ENCODE measurements at regions of chrX and their contacts with region 1.

Region 1: DNA sequence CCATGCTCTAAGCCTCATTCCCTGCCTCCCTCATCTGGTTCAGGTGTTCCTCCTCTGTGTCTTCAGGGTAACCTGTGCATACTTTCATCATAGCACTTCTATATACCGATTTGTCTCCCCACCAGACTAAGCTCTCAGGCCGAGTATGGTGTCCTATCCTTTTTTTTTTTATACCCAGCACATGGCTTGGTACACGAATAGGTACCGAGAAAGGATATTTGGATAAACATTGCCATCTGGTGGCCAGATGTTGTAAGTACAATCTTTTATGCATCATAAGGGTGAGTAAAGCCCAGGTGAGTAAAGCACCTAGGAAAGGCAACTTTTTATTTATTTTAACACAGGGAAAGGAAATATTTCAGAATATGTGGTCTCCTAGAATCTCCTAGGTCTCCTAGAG is 68.4 kb downstream of the MID2 start:
- DNase-seq: peak; percentile 5
- H3K4me3 Mint-ChIP-seq: no peak overlapping the region
- H3K27ac Mint-ChIP-seq: no peak overlapping the region
- H3K4me1 Mint-ChIP-seq: no peaks in the 10 kb centered on the region
- H3K27me3 Mint-ChIP-seq: peaks cover 2% of the 10 kb centered on the region

Region 2: GRCh38 chrX:106999002-106999975 is 894.7 kb before region 1 on chrX:
- intact Hi-C with region 1: loop called (anchors 5 kb)
- DNase-seq: peak; percentile 12
- H3K4me3 Mint-ChIP-seq: peak overlapping the region; percentile 87
- H3K27ac Mint-ChIP-seq: no peak overlapping the region
- H3K4me1 Mint-ChIP-seq: peaks cover 12% of the 10 kb centered on the region
- H3K27me3 Mint-ChIP-seq: peaks cover 3% of the 10 kb centered on the region

Region 3: DNA sequence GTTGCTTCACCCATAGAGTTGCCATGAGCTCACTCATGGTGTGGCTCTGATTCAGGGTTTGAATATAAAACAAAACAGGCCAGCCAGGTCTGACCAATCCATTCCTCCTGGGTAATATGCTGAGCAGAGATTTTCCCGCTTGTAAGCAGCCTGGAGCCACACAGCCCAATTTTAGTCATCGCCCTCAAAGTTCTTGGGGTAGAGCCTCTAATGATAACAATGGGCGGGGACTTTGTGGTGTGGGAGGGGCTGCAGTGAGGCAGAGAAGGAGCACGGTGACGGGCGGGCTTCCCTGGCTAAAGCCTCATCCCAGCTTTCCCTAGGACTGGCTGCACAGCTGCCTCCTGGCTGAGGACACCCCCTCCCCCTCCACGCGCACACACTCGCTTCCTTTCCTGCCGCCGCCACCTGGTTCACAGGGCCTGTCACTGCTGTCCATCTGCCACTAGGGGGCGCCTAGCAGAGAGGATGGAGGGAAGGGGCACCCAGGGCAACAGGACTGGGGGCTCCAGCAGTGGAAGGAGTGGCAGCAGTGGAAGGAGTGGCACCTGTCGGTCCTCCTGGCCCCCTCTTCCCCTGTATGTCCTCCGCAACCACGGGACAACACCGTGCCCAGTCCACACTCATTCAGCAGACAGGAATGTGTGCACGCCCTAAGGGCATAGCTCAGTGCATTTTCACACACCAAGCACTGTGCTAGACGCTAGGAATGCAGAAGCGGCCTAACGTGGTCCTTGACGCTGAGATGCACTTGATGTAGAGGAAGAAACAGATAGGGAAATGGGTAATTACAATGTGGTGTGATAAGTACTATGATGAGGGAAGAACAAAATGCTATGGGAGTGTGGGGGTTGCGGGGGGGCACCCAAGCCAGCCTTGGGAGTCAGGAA is 238.9 kb before region 1 on chrX:
- intact Hi-C with region 1: loop called (anchors 1 kb)
- DNase-seq: peak; percentile 38
- H3K4me3 Mint-ChIP-seq: no peak overlapping the region
- H3K27ac Mint-ChIP-seq: no peak overlapping the region
- H3K4me1 Mint-ChIP-seq: peaks cover 7% of the 10 kb centered on the region
- H3K27me3 Mint-ChIP-seq: no peaks in the 10 kb centered on the region

Region 4: GRCh38 chrX:107716816-107717700 is 177.0 kb before region 1 on chrX:
- intact Hi-C with region 1: loop called (anchors 2 kb)
- DNase-seq: peak; percentile 84
- H3K4me3 Mint-ChIP-seq: peak overlapping the region; percentile 93
- H3K27ac Mint-ChIP-seq: peak overlapping the region; percentile 87
- H3K4me1 Mint-ChIP-seq: peaks cover 46% of the 10 kb centered on the region
- H3K27me3 Mint-ChIP-seq: no peaks in the 10 kb centered on the region

Region 5: GRCh38 chrX:107769581-107770317 is 124.3 kb before region 1 on chrX:
- intact Hi-C with region 1: no loop called
- DNase-seq: no peak
- H3K4me3 Mint-ChIP-seq: no peak overlapping the region
- H3K27ac Mint-ChIP-seq: no peak overlapping the region
- H3K4me1 Mint-ChIP-seq: no peaks in the 10 kb centered on the region
- H3K27me3 Mint-ChIP-seq: peaks cover 8% of the 10 kb centered on the region

Region 6: DNA sequence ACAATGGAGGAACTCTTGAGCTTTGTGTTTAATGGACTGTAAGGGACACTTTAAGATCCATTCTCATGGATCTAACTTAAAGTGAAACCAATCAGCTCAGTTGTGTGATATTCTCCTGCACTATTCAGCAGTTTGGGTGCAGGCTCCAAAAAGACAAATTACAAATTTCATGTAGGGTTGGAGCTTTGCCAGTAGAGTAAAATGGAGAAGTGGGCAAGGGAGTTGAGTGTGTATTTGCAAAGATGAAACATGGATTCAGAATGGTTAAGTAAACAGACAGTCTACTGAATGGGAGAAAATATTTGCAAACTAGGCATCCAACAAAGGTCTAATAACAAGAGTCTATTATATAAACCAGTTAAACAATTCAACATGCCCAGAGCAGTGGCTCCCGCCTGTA is 89.6 kb before region 1 on chrX:
- intact Hi-C with region 1: no loop called
- DNase-seq: no peak
- H3K4me3 Mint-ChIP-seq: no peak overlapping the region
- H3K27ac Mint-ChIP-seq: no peak overlapping the region
- H3K4me1 Mint-ChIP-seq: no peaks in the 10 kb centered on the region
- H3K27me3 Mint-ChIP-seq: peaks cover 2% of the 10 kb centered on the region

Region 7: DNA sequence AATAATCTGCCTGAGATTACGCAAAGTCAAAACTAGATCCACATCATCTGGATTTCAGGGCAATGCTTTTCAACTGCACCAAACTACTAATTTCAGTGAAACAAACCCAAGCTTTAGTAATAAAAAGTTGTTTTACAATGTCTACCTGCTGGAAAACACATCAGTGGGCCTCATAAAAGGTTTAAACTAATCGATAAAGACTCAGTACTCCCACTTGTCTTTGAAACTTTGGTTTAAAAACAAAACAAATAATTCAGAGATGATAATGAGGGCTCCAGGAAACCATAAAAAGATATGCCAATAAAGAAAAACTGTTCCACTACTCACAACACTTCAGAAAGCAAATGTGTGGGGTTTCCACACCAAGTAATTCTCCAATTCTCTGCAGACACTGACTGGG is 187.1 kb after region 1 on chrX:
- intact Hi-C with region 1: no loop called
- DNase-seq: no peak
- H3K4me3 Mint-ChIP-seq: no peak overlapping the region
- H3K27ac Mint-ChIP-seq: no peak overlapping the region
- H3K4me1 Mint-ChIP-seq: no peaks in the 10 kb centered on the region
- H3K27me3 Mint-ChIP-seq: no peaks in the 10 kb centered on the region